WTC11 (cell line): ENCODE measurements at regions of chr16 and their contacts with region 1.

Region 1: GRCh38 chr16:28846080-28846932 is at the start of gene TUFM:
- DNase-seq: peak; percentile 99
- ATAC-seq: peak; percentile 96
- H3K4me3 Mint-ChIP-seq: peak within 1 kb of the TSS; percentile 98
- H3K27ac Mint-ChIP-seq: peak within 1 kb of the TSS; percentile 96
- H3K4me1 Mint-ChIP-seq: peaks cover 14% of the 10 kb centered on the region
- H3K27me3 Mint-ChIP-seq: no peaks in the 10 kb centered on the region; the same call in 1 of the 2 replicates
- CTCF ChIP-seq: peak; percentile 34; the same call in 1 of the 2 replicates
- total RNA-seq, gene TUFM: 233 to 296 TPM (median 252 TPM) in 3 replicates

Region 2: DNA sequence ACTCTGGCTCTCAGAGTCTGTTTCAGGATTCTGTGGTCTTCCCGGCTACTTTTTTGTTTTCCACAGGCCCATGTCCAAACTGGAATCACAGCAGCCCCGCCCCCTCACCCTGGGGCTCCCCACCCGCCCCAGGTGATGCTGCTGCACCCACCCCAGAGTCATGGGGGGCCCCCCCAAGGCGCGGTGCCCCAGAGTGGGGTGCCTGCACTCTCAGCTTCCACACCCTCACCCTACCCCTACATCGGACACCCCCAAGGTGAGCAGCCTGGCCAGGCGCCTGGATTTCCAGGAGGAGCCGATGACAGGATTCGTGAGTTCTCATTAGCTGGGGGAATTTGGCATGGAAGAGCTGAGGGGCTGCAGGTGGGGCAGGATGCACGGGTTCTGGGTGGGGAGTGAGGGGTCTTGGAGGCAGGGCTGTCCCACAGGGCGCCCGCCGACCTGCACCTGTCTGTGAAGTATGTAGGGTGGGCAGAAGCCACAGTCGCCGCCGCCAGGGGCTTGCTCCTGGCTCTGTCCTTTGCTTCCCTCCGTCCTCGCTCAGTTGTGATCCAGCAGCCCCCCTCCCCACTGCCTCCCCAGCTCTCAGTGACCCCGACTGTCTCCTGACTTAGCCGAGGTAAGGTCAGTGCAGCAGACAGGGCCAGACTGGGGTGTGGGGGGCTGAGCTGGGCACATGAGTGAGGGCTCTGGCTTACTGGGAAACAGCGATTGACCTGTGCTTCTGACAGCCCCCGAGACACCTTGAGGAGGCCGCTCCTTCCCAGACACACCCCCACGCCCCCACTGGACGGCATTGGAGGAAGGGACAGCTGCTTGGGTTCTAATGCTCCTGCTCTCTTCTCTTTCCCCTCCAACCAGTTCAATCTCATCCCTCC is 10.2 kb before region 1 on chr16:
- CTCF ChIA-PET with region 1: interaction called, 10 read pairs
- POLR2A ChIA-PET with region 1: interaction called, 4 read pairs
- DNase-seq: peak; percentile 21
- ATAC-seq: peak; percentile 37
- H3K4me3 Mint-ChIP-seq: no peak overlapping the region
- H3K27ac Mint-ChIP-seq: no peak overlapping the region
- H3K4me1 Mint-ChIP-seq: no peaks in the 10 kb centered on the region
- H3K27me3 Mint-ChIP-seq: no peaks in the 10 kb centered on the region
- CTCF ChIP-seq: no peak

Region 3: GRCh38 chr16:28863929-28864793 is 17.9 kb after region 1 on chr16:
- CTCF ChIA-PET with region 1: interaction called, 19 read pairs
- POLR2A ChIA-PET with region 1: interaction called, 10 read pairs
- DNase-seq: no peak
- ATAC-seq: peak; percentile 10
- H3K4me3 Mint-ChIP-seq: peak overlapping the region; percentile 91
- H3K27ac Mint-ChIP-seq: peak overlapping the region; percentile 76
- H3K4me1 Mint-ChIP-seq: peaks cover 17% of the 10 kb centered on the region
- H3K27me3 Mint-ChIP-seq: no peaks in the 10 kb centered on the region
- CTCF ChIP-seq: no peak

Region 4: DNA sequence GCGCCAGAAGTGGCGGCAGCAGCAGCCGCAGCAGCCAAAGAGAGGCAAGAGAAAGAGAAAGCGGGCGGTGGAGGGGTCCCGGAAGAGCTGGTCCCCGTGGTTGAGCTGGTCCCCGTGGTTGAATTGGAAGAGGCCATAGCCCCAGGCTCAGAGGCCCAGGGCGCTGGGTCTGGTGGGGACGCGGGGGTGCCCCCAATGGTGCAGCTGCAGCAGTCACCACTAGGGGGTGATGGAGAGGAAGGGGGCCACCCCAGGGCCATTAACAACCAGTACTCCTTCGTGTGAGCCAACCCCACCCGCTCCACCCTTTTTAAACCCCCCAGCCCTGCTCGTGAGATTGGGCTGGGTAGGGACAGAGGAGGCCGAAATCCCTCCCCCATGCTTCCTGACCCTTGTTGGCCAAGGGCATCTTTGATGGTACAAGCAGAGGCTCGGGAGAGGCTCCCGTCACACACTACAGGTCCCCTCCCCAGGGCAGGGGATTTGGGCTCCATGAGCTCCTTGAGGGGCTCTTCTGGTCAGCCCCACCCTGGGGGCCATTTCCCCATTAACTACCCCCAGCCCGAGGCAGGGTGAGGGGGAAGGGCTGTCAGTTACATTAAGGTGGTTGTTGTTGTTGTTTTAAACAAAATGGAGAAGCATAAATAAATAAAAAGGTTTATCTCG is 27.4 kb after region 1 on chr16:
- CTCF ChIA-PET with region 1: interaction called, 11 read pairs
- POLR2A ChIA-PET with region 1: no interaction called
- DNase-seq: peak; percentile 77
- ATAC-seq: peak; percentile 79
- H3K4me3 Mint-ChIP-seq: no peak overlapping the region
- H3K27ac Mint-ChIP-seq: no peak overlapping the region
- H3K4me1 Mint-ChIP-seq: peaks cover 10% of the 10 kb centered on the region
- H3K27me3 Mint-ChIP-seq: no peaks in the 10 kb centered on the region
- CTCF ChIP-seq: peak; percentile 90

Region 5: DNA sequence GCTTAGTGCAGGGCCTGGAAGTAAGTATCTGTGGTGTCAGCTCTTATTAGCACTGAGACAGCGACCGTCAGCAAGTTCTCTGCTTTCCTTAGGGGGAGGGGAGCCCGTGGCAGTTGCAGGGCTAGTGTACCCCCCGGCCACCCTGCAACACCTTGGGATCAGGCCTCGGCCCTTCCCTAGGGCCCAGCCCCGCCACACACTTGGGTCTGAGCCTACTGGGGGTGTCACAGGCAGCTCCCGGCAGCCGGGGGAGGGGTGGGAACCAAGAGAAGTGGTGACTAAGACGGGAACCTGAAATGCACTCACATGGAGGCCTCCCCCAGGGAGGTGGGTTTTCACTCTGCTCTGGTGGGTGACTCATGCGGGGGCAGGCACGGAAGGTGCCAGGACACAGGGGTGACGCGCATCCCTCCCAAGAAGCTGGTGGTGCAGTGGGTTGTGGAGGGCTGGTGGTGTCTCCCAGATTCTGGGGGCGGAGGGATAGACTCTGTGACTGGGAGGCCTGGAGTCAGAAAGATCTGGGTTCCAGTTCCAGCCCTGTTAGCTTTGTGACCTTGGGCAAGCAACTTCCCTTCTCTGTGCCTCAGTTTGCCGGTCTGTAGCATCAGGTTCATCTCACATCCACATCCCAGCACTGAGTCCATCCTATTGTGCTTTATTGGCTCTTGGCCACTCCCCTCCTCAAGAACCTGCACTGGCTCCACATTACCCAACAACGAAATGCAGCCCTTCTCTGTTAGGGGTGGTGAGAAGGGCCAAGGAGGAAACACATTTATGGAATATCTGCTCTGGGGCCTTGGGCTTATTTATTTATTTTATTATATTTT is 183.1 kb after region 1 on chr16:
- CTCF ChIA-PET with region 1: no interaction called
- POLR2A ChIA-PET with region 1: no interaction called
- DNase-seq: peak; percentile 32
- ATAC-seq: peak; percentile 61
- H3K4me3 Mint-ChIP-seq: no peak overlapping the region
- H3K27ac Mint-ChIP-seq: no peak overlapping the region
- H3K4me1 Mint-ChIP-seq: peaks cover 13% of the 10 kb centered on the region
- H3K27me3 Mint-ChIP-seq: no peaks in the 10 kb centered on the region; the same call in 1 of the 2 replicates
- CTCF ChIP-seq: no peak